Activated T-helper 1 cell treated with anti-CD3 and anti-CD28 coated beads, Interleukin-12 subunit alpha, Interleukin-12 subunit beta, Interleukin-2, Interleukin-4 antibody, amounts not matched to agents 30 ng/mL and 10 ng/mL and 1 ng/mL, durations not matched to agents 14 hours and 24 hours and 36 hours (primary cell): ENCODE measurements at regions of chr4 and their contacts with region 1.

Region 1: DNA sequence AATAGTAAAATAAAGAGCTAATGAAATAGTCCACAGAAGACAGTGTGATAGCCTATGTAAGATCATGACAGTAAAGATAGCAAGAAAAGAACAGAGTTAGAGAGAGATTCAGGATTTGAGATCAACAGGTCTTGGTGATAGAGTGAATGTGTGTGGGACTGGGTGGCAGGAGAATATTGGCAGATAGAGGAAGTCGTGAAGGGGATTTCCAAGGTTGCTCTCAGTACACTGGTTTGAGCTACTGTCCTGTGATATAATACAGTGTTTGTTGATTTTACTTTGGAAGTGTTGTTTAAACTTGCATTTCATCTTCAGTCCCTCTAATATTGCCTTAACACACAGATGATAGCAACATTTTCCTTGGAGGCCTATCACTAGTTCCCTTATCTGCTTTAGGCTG is 44.1 kb downstream of the DTHD1 start:
- DNase-seq: no peak
- H3K4me3 Mint-ChIP-seq: peak overlapping the region; percentile 23
- H3K27ac Mint-ChIP-seq: peak overlapping the region; percentile 73
- H3K4me1 Mint-ChIP-seq: peaks cover 71% of the 10 kb centered on the region
- H3K27me3 Mint-ChIP-seq: no peaks in the 10 kb centered on the region

Region 2: DNA sequence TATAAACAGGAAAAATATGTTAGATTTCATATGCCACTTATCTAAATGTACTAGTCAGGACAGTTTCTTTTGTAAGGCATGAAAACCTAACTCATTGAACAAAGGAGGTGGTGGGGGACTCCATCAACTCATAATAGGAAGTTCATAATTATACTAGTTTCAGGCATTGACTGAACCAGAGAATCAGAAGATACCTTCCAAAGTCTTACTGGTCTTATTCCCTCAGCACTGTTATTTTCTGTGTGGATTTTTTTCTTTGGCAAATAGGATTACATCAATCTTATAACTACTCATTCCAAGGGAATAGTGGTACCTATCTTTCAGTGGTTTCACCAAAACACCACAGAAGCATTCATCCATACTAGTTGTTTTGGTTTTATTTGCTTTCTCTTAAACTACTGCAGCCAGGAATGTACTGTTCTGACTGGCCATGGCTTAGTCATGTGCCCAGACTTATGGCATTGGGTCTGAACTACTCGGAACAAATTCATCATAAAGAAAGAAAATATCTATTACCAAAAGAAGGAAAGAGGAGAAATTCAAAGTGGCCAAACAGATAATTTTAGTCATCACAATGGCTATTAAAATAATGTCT is 355.0 kb before region 1 on chr4:
- intact Hi-C with region 1: loop called (anchors 10 kb)
- DNase-seq: no peak
- H3K4me3 Mint-ChIP-seq: no peak overlapping the region
- H3K27ac Mint-ChIP-seq: no peak overlapping the region
- H3K4me1 Mint-ChIP-seq: peaks cover 1% of the 10 kb centered on the region
- H3K27me3 Mint-ChIP-seq: peaks cover 2% of the 10 kb centered on the region

Region 3: GRCh38 chr4:36187723-36188333 is 137.7 kb before region 1 on chr4:
- intact Hi-C with region 1: loop called (anchors 1 kb)
- DNase-seq: no peak
- H3K4me3 Mint-ChIP-seq: no peak overlapping the region
- H3K27ac Mint-ChIP-seq: no peak overlapping the region
- H3K4me1 Mint-ChIP-seq: peaks cover 39% of the 10 kb centered on the region
- H3K27me3 Mint-ChIP-seq: no peaks in the 10 kb centered on the region

Region 4: DNA sequence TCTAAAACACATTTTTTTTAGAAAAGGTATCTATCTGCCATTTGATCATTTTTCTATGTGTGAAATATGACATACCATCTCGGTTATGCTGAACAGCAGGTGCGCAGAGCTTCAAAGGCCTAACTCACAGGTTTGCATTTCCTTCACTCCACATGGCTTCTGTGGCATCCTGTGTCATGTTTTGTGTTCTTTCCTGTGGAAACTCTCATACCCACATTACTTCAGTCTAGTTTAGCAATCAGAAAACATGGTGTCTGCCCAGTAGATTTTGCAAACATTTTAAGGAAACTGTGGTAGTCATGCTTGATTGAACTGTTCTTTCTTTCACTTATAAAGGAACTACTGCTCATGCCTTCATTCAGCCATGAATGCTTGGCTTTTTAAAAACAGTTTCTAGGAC is 69.9 kb before region 1 on chr4:
- intact Hi-C with region 1: loop called (anchors 1 kb)
- DNase-seq: peak; percentile 72
- H3K4me3 Mint-ChIP-seq: peak overlapping the region; percentile 81
- H3K27ac Mint-ChIP-seq: peak overlapping the region; percentile 97
- H3K4me1 Mint-ChIP-seq: peaks cover 47% of the 10 kb centered on the region
- H3K27me3 Mint-ChIP-seq: no peaks in the 10 kb centered on the region

Region 5: DNA sequence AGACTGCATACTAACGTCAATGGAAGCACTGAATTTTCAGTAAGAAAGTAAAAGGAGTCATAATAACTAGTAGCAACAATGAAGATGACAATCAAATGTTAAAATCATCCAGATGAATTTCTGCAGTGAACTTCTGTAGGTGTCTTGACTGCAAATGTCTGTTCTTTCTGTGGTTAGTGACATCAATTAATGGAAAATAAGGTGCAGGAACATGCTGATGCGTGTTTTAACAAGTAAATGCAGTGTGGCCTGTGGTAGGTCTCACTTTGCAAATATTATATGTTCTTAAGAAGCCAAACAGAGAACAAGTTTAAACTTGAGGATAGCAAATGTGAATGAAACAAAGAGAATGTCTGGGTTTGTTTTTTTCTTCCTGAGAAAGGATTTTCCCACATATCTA is 46.7 kb before region 1 on chr4:
- intact Hi-C with region 1: loop called (anchors 1 kb)
- DNase-seq: no peak
- H3K4me3 Mint-ChIP-seq: peak overlapping the region; percentile 72
- H3K27ac Mint-ChIP-seq: peak overlapping the region; percentile 82
- H3K4me1 Mint-ChIP-seq: peaks cover 75% of the 10 kb centered on the region
- H3K27me3 Mint-ChIP-seq: no peaks in the 10 kb centered on the region